ENCODE measurements at regions of chr16 and their contacts with region 1.

Region 1: GRCh38 chr16:87363771-87364455 is 19.7 kb downstream of the FBXO31 start:
- DNase-seq: peak in 2 of 4 experiments; percentile 47 to 63
- ATAC-seq: peak; percentile 81
- H3K4me3 ChIP-seq: no peak overlapping the region
- H3K27ac ChIP-seq: peak overlapping the region; percentile 37; the same call in 2 of the 3 replicates
- H3K4me1 ChIP-seq: peaks cover 17% of the 10 kb centered on the region in 2 experiments
- H3K27me3 ChIP-seq: no peaks in the 10 kb centered on the region
- CTCF ChIP-seq: no peak
- EP300 ChIP-seq: no peak
- POLR2A ChIP-seq: no peak
- RAD21 ChIP-seq: no peak

Region 2: GRCh38 chr16:87374313-87374712 is 10.4 kb after region 1 on chr16:
- CTCF ChIA-PET with region 1: no interaction called
- POLR2A ChIA-PET with region 1: interaction called, 13 read pairs
- in situ Hi-C with region 1: no loop called
- intact Hi-C with region 1: no loop called
- DNase-seq: no peak
- ATAC-seq: no peak
- H3K4me3 ChIP-seq: no peak overlapping the region
- H3K27ac ChIP-seq: no peak overlapping the region
- H3K4me1 ChIP-seq: peaks cover 17 to 19% of the 10 kb centered on the region in 2 experiments; a peak in 4 of 5 replicates
- H3K27me3 ChIP-seq: no peaks in the 10 kb centered on the region
- CTCF ChIP-seq: no peak
- EP300 ChIP-seq: no peak
- POLR2A ChIP-seq: no peak
- RAD21 ChIP-seq: no peak

Region 3: DNA sequence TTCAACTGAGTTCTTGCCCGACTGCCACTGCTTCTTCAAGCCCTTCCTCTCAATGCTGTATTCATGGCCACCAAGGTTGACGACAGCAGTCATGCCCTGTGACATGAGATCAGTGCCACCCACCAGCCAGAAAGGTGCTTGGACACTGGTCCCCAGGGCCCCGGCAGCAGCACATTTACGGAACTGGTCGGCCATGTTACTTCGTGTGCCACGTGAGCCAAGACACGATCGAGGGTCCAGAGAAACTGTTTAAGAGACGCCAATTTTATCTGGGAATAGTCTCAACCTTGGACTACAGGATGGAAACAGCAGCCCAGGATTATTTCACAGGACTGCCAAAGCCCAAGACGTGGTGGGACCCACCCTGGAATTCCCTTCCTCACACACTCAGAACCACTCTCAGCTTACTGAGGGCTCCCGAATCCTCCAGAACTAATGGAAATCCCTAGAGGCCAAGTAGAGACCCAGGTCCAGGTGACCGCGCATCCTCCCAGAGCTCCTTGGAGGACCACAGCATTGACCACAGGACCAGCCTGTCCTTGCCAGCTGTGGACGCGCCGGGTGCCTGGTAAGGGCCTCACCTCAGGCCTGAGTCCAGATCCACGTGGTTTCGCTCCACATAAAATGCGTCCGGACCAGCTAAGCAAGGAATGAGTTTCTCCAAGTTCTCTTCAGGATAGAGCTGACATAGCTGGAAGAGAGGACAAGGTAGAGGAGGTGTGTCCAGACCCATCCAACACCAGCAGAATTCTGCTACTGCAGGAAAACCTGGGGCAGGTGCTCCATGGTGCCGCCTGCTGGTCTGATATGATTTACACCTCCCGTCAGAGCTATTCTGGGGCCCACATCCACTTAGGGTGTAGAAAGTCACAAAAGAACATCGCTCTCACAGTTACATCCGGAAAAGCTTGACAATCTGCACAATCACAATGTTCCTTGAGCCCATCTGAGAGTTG is 56.4 kb after region 1 on chr16:
- CTCF ChIA-PET with region 1: no interaction called
- POLR2A ChIA-PET with region 1: no interaction called
- in situ Hi-C with region 1: no loop called
- intact Hi-C with region 1: no loop called
- DNase-seq: peak; percentile 23 to 58 (median 38)
- ATAC-seq: peak; percentile 87
- H3K4me3 ChIP-seq: no peak overlapping the region
- H3K27ac ChIP-seq: no peak overlapping the region
- H3K4me1 ChIP-seq: peaks cover 0 to 7% of the 10 kb centered on the region in 2 experiments; a peak in 2 of 5 replicates
- H3K27me3 ChIP-seq: no peaks in the 10 kb centered on the region; a peak in 1 of 5 replicates
- CTCF ChIP-seq: peak; percentile 53 to 75 (median 56)
- EP300 ChIP-seq: no peak
- POLR2A ChIP-seq: no peak
- RAD21 ChIP-seq: peak; percentile 11 to 29; a peak in 1 of 4 replicates